Activated CD8-positive, alpha-beta T cell treated with anti-CD3 and anti-CD28 coated beads, Interleukin-2, amount 10 ng/mL, durations not matched to agents 7 days and 5 days (primary cell): ENCODE measurements at regions of chr1 and their contacts with region 1.

Region 1: GRCh38 chr1:247373721-247374141 is 42.1 kb upstream of the ZNF496 start:
- DNase-seq: peak; percentile 78
- ATAC-seq: peak; percentile 83
- H3K4me3 Mint-ChIP-seq: peak overlapping the region; percentile 23
- H3K27ac Mint-ChIP-seq: no peak overlapping the region
- H3K4me1 Mint-ChIP-seq: peaks cover 6% of the 10 kb centered on the region
- H3K27me3 Mint-ChIP-seq: peaks cover 11% of the 10 kb centered on the region

Region 2: DNA sequence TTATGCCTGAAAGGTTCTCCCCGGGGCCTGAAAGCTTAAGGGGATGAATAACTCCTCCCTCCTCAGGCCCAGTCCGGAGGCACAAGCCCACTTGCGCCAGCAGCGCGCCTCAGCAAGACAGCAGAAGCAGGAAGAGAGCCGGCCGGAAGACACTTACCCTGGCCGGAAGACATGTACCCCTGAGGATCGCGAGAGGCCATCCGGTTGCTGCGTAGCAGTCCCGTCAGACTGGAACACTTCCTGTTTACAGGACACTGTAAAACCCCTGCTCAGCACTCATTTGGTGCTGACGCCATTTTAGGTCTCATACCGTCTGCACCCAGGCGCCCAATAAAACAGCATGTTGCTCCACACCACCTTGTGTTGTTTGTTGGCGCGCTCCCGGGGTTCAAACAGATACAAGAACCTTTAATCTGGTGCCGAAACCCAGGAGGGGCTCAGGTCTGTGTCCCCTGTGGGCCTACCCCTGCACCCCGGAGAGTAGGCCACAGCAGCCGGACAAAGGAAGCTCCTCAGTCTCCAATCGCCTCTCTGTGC is 87.5 kb before region 1 on chr1:
- CTCF ChIA-PET with region 1: no interaction called
- POLR2A ChIA-PET with region 1: no interaction called
- DNase-seq: no peak
- ATAC-seq: no peak
- H3K4me3 Mint-ChIP-seq: no peak overlapping the region
- H3K27ac Mint-ChIP-seq: no peak overlapping the region
- H3K4me1 Mint-ChIP-seq: peaks cover 2% of the 10 kb centered on the region
- H3K27me3 Mint-ChIP-seq: no peaks in the 10 kb centered on the region

Region 3: GRCh38 chr1:247415423-247416361 is 42.0 kb after region 1 on chr1 and contains the start of gene NLRP3:
- CTCF ChIA-PET with region 1: interaction called, 17 read pairs
- POLR2A ChIA-PET with region 1: interaction called, 3 read pairs
- DNase-seq: peak; percentile 68
- ATAC-seq: peak; percentile 88
- H3K4me3 Mint-ChIP-seq: peak within 1 kb of the TSS; percentile 82
- H3K27ac Mint-ChIP-seq: peak within 1 kb of the TSS; percentile 88
- H3K4me1 Mint-ChIP-seq: peaks cover 48% of the 10 kb centered on the region
- H3K27me3 Mint-ChIP-seq: peaks cover 3% of the 10 kb centered on the region
- total RNA-seq, gene NLRP3: 4.5 to 4.7 TPM

Region 4: GRCh38 chr1:247487057-247487456 is 113.3 kb after region 1 on chr1:
- CTCF ChIA-PET with region 1: interaction called, 40 read pairs
- POLR2A ChIA-PET with region 1: no interaction called
- DNase-seq: peak; percentile 41
- ATAC-seq: peak; percentile 69
- H3K4me3 Mint-ChIP-seq: no peak overlapping the region
- H3K27ac Mint-ChIP-seq: no peak overlapping the region
- H3K4me1 Mint-ChIP-seq: no peaks in the 10 kb centered on the region
- H3K27me3 Mint-ChIP-seq: peaks cover 15% of the 10 kb centered on the region